Gastrocnemius medialis (tissue), 4 donors: ENCODE measurements at regions of chr10 and their contacts with region 1.

Region 1: GRCh38 chr10:107280293-107280692 is 115.8 kb upstream of the SORCS1 start:
- DNase-seq: no peak
- ATAC-seq: no peak
- H3K4me3 ChIP-seq: no peak overlapping the region
- H3K27ac ChIP-seq: no peak overlapping the region
- H3K4me1 ChIP-seq: no peaks in the 10 kb centered on the region
- H3K27me3 ChIP-seq: no peaks in the 10 kb centered on the region
- CTCF ChIP-seq: no peak
- POLR2A ChIP-seq: no peak

Region 2: DNA sequence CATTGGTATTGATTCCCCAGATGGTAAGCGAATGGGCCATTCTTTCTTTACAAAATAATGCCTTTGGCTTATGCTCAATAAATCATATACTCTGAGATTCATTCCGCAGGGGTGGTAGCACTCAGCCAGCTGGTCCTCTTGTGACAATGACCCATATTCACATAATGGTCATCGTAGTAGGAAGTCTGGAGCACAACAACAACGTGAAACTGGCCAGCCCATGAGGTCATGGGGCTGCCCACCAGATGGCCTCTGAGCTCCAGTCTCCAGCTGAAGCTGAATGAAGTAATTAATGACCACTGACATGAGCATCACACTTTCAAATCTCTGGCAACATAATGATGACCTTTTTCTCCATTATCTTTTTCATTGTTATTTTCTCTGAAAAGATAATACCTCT is 73.5 kb before region 1 on chr10:
- in situ Hi-C with region 1: no loop called
- intact Hi-C with region 1: no loop called
- DNase-seq: no peak
- ATAC-seq: no peak
- H3K4me3 ChIP-seq: no peak overlapping the region
- H3K27ac ChIP-seq: no peak overlapping the region
- H3K4me1 ChIP-seq: no peaks in the 10 kb centered on the region
- H3K27me3 ChIP-seq: no peaks in the 10 kb centered on the region
- CTCF ChIP-seq: no peak
- POLR2A ChIP-seq: no peak

Region 3: GRCh38 chr10:107391901-107392300 is 111.6 kb after region 1 on chr10:
- in situ Hi-C with region 1: loop called in 1 of 4 experiments (anchors 25 kb)
- intact Hi-C with region 1: no loop called
- DNase-seq: no peak
- ATAC-seq: no peak
- H3K4me3 ChIP-seq: no peak overlapping the region
- H3K27ac ChIP-seq: no peak overlapping the region
- H3K4me1 ChIP-seq: no peaks in the 10 kb centered on the region
- H3K27me3 ChIP-seq: no peaks in the 10 kb centered on the region
- CTCF ChIP-seq: no peak
- POLR2A ChIP-seq: no peak